KBM-7 (cell line): ENCODE measurements at regions of chr11 and their contacts with region 1.

Region 1: GRCh38 chr11:57345555-57346211 is 7.5 kb downstream of the P2RX3 start:
- DNase-seq: peak; percentile 74

Region 2: DNA sequence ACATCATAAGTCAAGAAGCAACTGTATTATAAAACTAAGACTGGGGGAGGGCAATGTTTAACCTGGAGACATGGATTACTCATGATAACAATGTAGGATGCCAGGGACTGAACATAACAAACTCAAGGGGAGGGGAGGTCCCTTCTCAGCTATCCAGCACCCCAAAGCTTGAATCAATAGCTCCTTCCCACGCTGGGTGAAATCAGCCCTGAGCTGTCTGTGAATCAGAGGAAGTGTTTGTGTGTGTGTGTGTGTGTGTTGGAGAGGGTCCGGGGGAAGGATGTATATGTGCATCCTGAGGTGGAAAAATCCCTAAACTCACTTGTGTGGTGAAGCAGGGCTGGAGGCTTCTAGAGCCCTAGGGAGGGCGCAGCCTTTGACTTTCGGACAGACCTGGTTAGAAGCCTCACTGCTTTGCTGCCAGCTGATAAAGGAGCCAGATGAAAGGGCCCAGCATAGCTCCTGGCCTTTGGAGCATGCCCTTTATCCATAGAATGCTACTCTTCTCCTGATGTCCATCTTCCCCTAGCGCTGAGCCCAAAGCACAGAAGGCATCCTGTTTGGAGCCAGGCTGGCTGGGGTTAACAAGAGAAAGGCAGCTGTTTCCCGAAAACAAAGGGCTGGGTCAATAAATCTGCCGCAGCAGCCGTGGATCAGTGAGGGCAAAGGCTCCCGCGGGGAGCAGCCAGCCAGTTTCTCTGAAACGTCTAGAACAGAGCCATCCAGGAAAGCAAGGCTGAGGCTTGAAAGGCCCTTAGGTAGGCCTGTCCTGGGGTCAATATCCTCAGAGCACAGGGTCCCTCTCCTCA is 56.7 kb before region 1 on chr11:
- in situ Hi-C with region 1: loop called (anchors 10 kb)
- DNase-seq: no peak